ENCODE measurements at regions of chr17 and their contacts with region 1.

Region 1: GRCh38 chr17:44170499-44171201 is at the start of gene ASB16:
- DNase-seq: peak; percentile 28
- ATAC-seq: peak; percentile 60
- H3K4me3 Mint-ChIP-seq: no peak within 1 kb of the TSS
- H3K27ac Mint-ChIP-seq: no peak within 1 kb of the TSS
- H3K4me1 Mint-ChIP-seq: peaks cover 23% of the 10 kb centered on the region
- H3K27me3 Mint-ChIP-seq: no peaks in the 10 kb centered on the region; the same call in 1 of the 2 replicates
- CTCF ChIP-seq: no peak
- total RNA-seq, gene ASB16: 0.11 to 0.23 TPM (median 0.14 TPM) in 3 replicates

Region 2: GRCh38 chr17:43966271-43966670 is 204.4 kb before region 1 on chr17:
- CTCF ChIA-PET with region 1: no interaction called
- POLR2A ChIA-PET with region 1: no interaction called
- DNase-seq: no peak
- ATAC-seq: no peak
- H3K4me3 Mint-ChIP-seq: no peak overlapping the region
- H3K27ac Mint-ChIP-seq: no peak overlapping the region
- H3K4me1 Mint-ChIP-seq: no peaks in the 10 kb centered on the region
- H3K27me3 Mint-ChIP-seq: peaks cover 3% of the 10 kb centered on the region; the same call in 1 of the 2 replicates
- CTCF ChIP-seq: no peak

Region 3: GRCh38 chr17:44044067-44044466 is 126.6 kb before region 1 on chr17:
- CTCF ChIA-PET with region 1: interaction called, 11 read pairs
- POLR2A ChIA-PET with region 1: no interaction called
- DNase-seq: no peak
- ATAC-seq: no peak
- H3K4me3 Mint-ChIP-seq: no peak overlapping the region
- H3K27ac Mint-ChIP-seq: peak overlapping the region; percentile 70
- H3K4me1 Mint-ChIP-seq: peaks cover 16% of the 10 kb centered on the region
- H3K27me3 Mint-ChIP-seq: no peaks in the 10 kb centered on the region
- CTCF ChIP-seq: no peak

Region 4: GRCh38 chr17:44110823-44111633 is 59.6 kb before region 1 on chr17:
- CTCF ChIA-PET with region 1: interaction called, 44 read pairs
- POLR2A ChIA-PET with region 1: interaction called, 3 read pairs
- DNase-seq: peak; percentile 82
- ATAC-seq: peak; percentile 75
- H3K4me3 Mint-ChIP-seq: peak overlapping the region; percentile 49
- H3K27ac Mint-ChIP-seq: no peak overlapping the region
- H3K4me1 Mint-ChIP-seq: peaks cover 48% of the 10 kb centered on the region
- H3K27me3 Mint-ChIP-seq: no peaks in the 10 kb centered on the region
- CTCF ChIP-seq: no peak

Region 5: DNA sequence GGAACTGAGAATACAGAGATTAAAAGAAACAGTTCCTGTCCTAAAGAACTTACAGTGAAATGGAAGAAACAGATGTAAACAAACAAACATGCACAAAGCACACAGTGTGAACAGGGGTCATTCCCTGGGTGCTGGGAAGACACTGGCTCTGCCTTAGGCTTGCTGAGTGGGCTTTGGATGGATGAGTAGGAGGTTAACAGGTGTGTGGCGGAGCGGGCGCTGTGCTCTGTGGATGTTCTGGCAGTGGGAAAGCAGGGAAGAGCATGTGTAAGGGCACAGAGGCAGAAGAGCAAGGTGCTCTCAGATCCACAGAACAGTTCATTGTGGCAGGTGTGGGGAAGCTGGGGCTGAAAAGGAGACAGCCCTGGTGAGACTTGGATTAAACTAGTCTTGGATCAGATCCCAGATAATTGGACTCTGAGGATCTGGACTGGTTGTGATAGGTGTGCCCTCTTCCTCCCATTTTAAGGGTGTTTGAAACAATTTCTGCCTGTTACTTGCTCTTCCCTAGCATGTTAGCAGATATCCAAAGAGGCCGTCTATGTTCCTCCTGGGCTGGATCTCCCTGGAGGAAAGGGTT is 20.8 kb before region 1 on chr17:
- CTCF ChIA-PET with region 1: interaction called, 39 read pairs
- POLR2A ChIA-PET with region 1: interaction called, 3 read pairs
- DNase-seq: no peak
- ATAC-seq: no peak
- H3K4me3 Mint-ChIP-seq: no peak overlapping the region
- H3K27ac Mint-ChIP-seq: peak overlapping the region; percentile 19; the same call in 1 of the 2 replicates
- H3K4me1 Mint-ChIP-seq: no peaks in the 10 kb centered on the region
- H3K27me3 Mint-ChIP-seq: no peaks in the 10 kb centered on the region
- CTCF ChIP-seq: no peak

Region 6: DNA sequence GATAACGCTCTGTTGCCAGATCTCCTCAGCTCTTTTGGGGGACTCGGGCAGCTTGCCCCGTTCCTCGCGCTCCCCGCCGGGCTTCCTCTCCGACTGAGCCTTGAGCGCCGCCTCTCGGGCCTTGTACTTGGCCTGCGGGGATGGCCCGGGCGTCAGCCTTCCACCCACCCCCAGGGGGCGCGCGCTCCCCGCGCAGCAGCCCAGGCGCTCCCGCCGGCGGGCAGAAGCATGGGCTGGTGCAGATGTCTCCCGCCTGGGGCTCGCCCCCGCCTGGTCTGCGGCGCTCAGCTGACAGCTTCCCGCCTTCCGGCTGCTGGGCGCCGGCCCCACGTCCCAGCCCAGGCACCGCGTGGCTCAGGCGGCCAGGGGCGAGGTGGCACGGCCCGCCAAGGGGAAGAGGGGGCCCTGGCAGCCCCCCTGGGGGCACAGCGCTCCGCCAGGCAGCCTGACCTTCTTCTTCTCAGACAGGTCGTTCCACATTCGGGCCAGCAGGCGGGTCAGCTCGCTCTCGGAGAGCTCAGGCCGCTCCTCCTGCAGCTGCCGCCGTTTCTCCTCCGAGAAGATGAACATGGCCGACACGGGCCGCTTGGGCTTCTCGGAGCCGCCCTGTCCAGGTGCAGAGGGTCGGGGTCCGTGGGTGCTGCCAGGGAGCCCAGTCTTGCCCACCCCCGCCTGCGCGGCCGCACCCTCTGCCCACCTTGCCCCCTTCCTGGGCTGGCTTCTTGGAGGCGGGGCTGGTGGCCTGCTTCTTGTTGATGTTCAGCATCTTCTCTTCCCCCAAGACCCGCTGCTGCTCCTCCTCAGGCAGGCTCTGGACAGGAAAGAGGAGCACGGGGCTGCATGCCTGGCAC is 39.9 kb after region 1 on chr17:
- CTCF ChIA-PET with region 1: interaction called, 32 read pairs
- POLR2A ChIA-PET with region 1: no interaction called
- DNase-seq: peak; percentile 94
- ATAC-seq: peak; percentile 89
- H3K4me3 Mint-ChIP-seq: no peak overlapping the region
- H3K27ac Mint-ChIP-seq: peak overlapping the region; percentile 42
- H3K4me1 Mint-ChIP-seq: peaks cover 20% of the 10 kb centered on the region
- H3K27me3 Mint-ChIP-seq: no peaks in the 10 kb centered on the region
- CTCF ChIP-seq: peak; percentile 95

Region 7: GRCh38 chr17:44350733-44351226 is 180.1 kb after region 1 on chr17:
- CTCF ChIA-PET with region 1: interaction called, 25 read pairs
- POLR2A ChIA-PET with region 1: no interaction called
- DNase-seq: peak; percentile 82
- ATAC-seq: peak; percentile 68
- H3K4me3 Mint-ChIP-seq: no peak overlapping the region
- H3K27ac Mint-ChIP-seq: no peak overlapping the region
- H3K4me1 Mint-ChIP-seq: peaks cover 14% of the 10 kb centered on the region
- H3K27me3 Mint-ChIP-seq: peaks cover 3% of the 10 kb centered on the region; the same call in 1 of the 2 replicates
- CTCF ChIP-seq: peak; percentile 69